ENCODE measurements at regions of chr3 and their contacts with region 1.

Region 1: DNA sequence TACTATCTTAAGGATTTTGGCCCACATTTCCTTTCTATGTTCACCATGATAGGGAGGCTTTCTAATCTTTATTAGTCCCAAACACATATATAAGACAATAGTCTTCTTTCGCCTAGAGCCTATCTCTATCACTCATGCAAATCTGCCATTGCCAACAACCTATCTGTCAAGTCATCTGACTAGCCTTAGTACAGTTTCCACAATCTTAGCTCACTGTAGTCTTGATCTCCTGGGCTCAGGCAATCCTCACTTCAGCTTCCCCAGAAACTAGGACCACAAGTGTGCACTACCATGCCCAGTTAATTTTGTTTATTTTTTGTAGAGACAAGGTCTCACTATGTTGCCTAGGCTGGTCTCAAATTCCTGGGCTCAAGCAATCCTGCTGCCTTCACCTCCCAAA is 6.9 kb downstream of the TMEM39A start:
- DNase-seq: no peak
- ATAC-seq: no peak
- H3K4me3 ChIP-seq: no peak overlapping the region
- H3K4me3 Mint-ChIP-seq: no peak overlapping the region
- H3K27ac ChIP-seq: no peak overlapping the region
- H3K27ac Mint-ChIP-seq: no peak overlapping the region
- H3K4me1 ChIP-seq: no peaks in the 10 kb centered on the region
- H3K4me1 Mint-ChIP-seq: peaks cover 29 to 36% (median 35%) of the 10 kb centered on the region in 3 donors
- H3K27me3 ChIP-seq: no peaks in the 10 kb centered on the region
- H3K27me3 Mint-ChIP-seq: no peaks in the 10 kb centered on the region

Region 2: DNA sequence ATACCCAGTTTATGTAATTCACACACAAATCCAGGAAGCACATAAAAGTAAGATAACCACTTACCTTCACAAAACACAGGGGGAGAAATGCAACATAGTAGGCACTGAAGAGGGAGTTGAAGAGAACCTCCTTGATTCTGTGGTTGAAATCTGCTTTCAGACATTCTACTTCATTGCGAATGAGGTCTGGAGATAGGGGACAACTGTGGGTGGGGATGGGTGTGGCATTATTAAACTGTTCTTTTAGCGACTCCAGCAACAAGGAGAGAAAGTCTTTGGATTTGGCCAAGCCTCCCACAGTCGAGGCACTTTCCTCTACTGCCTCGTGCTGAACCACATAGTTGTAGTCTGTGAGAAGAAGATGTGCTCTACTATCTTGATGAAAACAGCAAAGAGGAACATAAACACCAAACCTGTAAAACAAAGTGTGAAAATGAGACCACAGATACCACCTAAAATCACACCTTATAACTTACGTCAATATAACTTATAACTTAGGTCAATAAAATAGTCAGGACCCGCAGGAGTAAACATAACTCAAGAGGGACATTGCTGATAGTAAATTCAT is 18.7 kb before region 1 on chr3:
- CTCF ChIA-PET with region 1: interaction called in 1 of 2 experiments, 3 read pairs
- POLR2A ChIA-PET with region 1: interaction called, 3 to 10 read pairs
- DNase-seq: peak in 1 of 35 experiments; percentile 24
- ATAC-seq: peak in 1 of 4 experiments; percentile 26
- H3K4me3 ChIP-seq: no peak overlapping the region
- H3K4me3 Mint-ChIP-seq: no peak overlapping the region
- H3K27ac ChIP-seq: no peak overlapping the region
- H3K27ac Mint-ChIP-seq: no peak overlapping the region
- H3K4me1 ChIP-seq: peaks cover 0 to 4% of the 10 kb centered on the region in 2 experiments
- H3K4me1 Mint-ChIP-seq: peaks cover 0 to 2% (median 0%) of the 10 kb centered on the region in 3 donors
- H3K27me3 ChIP-seq: no peaks in the 10 kb centered on the region
- H3K27me3 Mint-ChIP-seq: no peaks in the 10 kb centered on the region

Measured in T-cell (primary cell).